ENCODE measurements at regions of chr13 and their contacts with region 1.

Region 1: DNA sequence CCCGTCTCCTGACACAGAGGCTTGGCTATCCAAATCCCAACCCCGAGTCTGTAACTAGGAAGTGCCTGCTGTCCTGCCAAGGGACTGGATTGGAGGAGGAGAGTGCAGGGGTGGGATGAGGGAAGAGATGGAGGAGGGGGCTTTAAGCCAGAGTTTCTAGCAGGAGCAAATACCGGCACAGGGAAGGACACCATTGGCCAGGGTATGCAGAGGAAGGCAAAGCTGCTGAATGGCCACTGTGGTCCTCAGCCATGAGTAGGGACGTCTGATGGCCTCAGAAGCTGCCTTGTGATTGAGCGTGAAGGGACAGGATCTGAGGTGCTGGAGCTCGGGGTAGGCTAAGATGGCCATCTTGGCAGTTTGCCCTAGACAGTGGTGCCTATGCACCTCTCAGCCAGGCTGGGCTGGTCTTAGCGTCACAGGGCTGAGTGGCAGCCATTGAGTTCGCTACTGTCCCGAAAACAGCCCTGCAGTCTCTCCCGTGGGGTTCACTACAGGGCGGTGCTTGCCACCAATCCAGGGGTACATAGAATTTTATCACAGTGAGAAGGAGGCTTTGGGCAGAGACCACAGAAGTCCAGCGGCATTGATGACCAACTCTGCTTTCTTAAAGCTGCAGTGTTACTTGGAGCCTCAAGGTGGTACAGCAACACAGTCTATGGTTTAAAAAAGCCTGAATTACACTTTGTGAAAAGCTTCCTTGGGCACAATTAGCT is 61.8 kb downstream of the AKAP11 start:
- DNase-seq: no peak
- H3K4me3 Mint-ChIP-seq: no peak overlapping the region
- H3K27ac Mint-ChIP-seq: no peak overlapping the region
- H3K4me1 Mint-ChIP-seq: peaks cover 31% of the 10 kb centered on the region
- H3K27me3 Mint-ChIP-seq: peaks cover 3% of the 10 kb centered on the region

Region 2: DNA sequence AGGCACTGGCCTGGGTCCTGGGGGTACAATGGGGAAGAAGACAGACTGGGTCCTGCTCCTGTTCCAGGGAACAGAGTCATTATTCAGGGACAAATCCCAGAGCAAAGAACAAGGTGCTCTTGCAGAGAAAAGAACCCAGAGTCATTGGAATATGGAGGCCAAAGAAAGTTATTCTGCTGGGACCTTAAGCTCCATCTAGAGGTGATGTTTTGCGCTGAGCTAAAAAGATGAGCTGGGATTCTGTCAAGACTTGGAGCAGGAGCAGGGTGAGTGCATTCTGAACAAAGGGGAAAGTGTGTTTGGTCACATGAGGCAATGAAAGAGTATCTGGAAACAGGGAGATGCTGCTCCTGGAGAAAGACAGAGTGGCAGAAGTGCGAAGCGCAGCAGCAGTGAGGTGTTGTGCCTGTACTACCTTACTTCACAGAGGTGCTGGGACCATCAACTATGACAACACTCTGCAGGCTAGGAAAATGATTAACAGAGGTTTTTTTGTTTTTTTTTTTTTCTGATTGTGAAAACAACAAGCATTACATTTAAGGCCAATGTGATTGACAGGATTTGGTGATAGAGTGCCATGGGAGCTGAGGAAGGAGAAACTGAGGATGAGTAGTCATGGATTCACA is 144.9 kb after region 1 on chr13:
- CTCF ChIA-PET with region 1: interaction called, 38 read pairs
- DNase-seq: peak; percentile 20
- H3K4me3 Mint-ChIP-seq: no peak overlapping the region
- H3K27ac Mint-ChIP-seq: no peak overlapping the region
- H3K4me1 Mint-ChIP-seq: peaks cover 7% of the 10 kb centered on the region
- H3K27me3 Mint-ChIP-seq: peaks cover 4% of the 10 kb centered on the region

Region 3: GRCh38 chr13:42594970-42595571 is 261.3 kb after region 1 on chr13:
- CTCF ChIA-PET with region 1: interaction called, 11 read pairs
- DNase-seq: peak; percentile 61
- H3K4me3 Mint-ChIP-seq: no peak overlapping the region
- H3K27ac Mint-ChIP-seq: no peak overlapping the region
- H3K4me1 Mint-ChIP-seq: no peaks in the 10 kb centered on the region
- H3K27me3 Mint-ChIP-seq: peaks cover 30% of the 10 kb centered on the region

Measured in activated naive CD4-positive, alpha-beta T cell treated with anti-CD3 and anti-CD28 coated beads, Interleukin-2, amount 10 ng/mL, durations not matched to agents 7 days and 5 days (primary cell).